ENCODE measurements at regions of chr2 and their contacts with region 1.

Region 1: DNA sequence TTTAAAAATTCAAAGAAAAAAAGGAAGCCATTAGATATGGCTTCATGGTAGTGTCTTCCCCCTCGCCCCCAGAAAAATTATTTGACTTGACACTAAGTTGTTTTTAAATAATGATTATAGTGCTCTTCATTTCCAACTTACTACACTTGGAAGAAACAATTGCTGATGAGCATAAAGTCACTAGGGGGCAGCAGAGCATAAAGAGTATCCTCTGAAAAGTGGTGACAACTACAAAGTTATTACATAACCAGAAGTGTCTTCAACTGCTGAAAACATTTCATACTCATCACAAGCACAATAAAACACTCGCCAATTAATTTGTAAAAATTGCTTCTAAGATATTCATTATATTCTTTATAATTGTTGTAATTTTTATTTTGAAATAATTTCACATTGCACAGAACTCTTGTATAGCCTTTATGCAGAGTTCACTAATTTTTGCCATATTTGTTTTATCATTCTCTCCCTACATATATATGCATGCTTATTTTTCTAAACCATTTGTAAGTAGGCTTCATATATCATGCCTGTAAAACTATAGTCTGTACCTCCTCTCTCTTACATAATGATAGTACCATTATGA is 54.9 kb downstream of the EXOC6B start:
- DNase-seq: peak; percentile 83
- H3K4me3 ChIP-seq: no peak overlapping the region
- H3K27ac ChIP-seq: no peak overlapping the region
- H3K4me1 ChIP-seq: no peaks in the 10 kb centered on the region
- H3K27me3 ChIP-seq: no peaks in the 10 kb centered on the region
- CTCF ChIP-seq: peak; percentile 74 to 85 (median 75)
- POLR2A ChIP-seq: no peak

Region 2: GRCh38 chr2:72859831-72860262 is 88.9 kb after region 1 on chr2:
- intact Hi-C with region 1: loop called (anchors 10 kb)
- DNase-seq: peak; percentile 79
- H3K4me3 ChIP-seq: no peak overlapping the region
- H3K27ac ChIP-seq: no peak overlapping the region
- H3K4me1 ChIP-seq: no peaks in the 10 kb centered on the region
- H3K27me3 ChIP-seq: no peaks in the 10 kb centered on the region
- CTCF ChIP-seq: peak in 2 of 3 experiments; percentile 34 to 46
- POLR2A ChIP-seq: no peak